IMR-90 (cell line): ENCODE measurements at regions of chr13 and their contacts with region 1.

Region 1: GRCh38 chr13:44903596-44903995 is 85.7 kb downstream of the NUFIP1 start:
- DNase-seq: peak; percentile 84
- ATAC-seq: peak; percentile 56
- H3K4me3 ChIP-seq: no peak overlapping the region
- H3K27ac ChIP-seq: peak overlapping the region; percentile 63; the same call in 1 of the 2 replicates
- H3K4me1 ChIP-seq: peaks cover 27% of the 10 kb centered on the region
- H3K27me3 ChIP-seq: no peaks in the 10 kb centered on the region
- CTCF ChIP-seq: no peak
- POLR2A ChIP-seq: no peak
- RAD21 ChIP-seq: no peak

Region 2: DNA sequence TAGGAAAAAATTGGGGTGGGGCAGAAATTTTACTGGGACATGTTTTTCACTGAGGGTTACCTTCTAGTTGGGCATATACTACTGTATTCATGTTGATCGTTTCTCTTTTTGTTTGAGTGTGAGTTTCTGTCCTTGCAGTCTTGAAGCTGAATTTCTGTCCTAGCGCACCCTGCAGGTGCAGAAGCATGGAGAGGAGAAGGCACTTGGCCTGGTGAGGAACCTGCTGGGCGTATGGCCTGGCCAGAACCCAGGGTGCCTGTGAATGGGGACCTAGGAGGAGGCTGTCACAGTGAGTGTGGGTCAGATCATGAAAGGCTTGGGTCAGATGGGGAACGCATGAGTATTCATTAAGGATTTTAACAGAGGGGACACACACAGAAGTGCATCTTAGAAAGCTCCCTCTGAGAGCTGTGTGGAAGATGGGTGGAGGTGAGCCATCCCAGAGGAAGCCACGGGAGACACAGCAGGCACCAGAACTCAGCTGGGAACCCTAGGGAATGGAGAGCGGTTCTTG is 493.2 kb before region 1 on chr13:
- CTCF ChIA-PET with region 1: no interaction called
- POLR2A ChIA-PET with region 1: no interaction called
- dilution Hi-C with region 1: no loop called
- in situ Hi-C with region 1: no loop called
- intact Hi-C with region 1: no loop called
- DNase-seq: no peak
- ATAC-seq: no peak
- H3K4me3 ChIP-seq: no peak overlapping the region
- H3K27ac ChIP-seq: no peak overlapping the region
- H3K4me1 ChIP-seq: peaks cover 7% of the 10 kb centered on the region
- H3K27me3 ChIP-seq: peaks cover 7% of the 10 kb centered on the region
- CTCF ChIP-seq: no peak
- POLR2A ChIP-seq: no peak
- RAD21 ChIP-seq: no peak

Region 3: DNA sequence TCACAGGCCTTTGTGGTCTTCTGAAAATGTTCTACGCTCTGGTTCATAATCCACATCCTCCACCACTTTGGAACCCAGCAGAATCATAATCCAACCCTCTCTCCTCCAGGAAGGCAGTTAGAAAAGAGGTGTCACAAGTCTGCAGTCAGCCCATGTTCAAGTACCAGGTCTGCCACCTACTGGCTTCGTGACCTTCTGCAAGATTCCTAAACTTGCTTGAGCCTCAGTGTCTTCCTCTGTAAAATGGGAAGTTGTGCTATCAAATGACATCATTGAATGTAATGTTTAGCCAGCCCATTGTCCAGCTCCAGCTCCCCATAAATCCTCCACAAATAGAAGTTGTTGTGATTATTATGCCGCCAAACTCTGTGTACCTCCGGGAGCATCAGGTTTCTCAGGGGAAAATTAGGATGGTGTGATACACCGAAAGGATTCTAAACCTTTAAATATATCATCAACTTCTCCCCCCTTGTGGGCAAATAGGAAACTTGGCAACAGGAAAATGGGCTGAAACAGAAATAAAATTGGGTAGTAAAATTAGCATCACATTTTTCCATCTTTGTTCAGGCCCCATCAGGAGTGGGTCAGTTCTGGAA is 24.0 kb before region 1 on chr13:
- CTCF ChIA-PET with region 1: no interaction called
- POLR2A ChIA-PET with region 1: no interaction called
- dilution Hi-C with region 1: no loop called
- in situ Hi-C with region 1: no loop called
- intact Hi-C with region 1: loop called (anchors 2 kb)
- DNase-seq: peak; percentile 64
- ATAC-seq: peak; percentile 40; the same call in 1 of the 2 replicates
- H3K4me3 ChIP-seq: no peak overlapping the region
- H3K27ac ChIP-seq: no peak overlapping the region
- H3K4me1 ChIP-seq: peaks cover 5% of the 10 kb centered on the region
- H3K27me3 ChIP-seq: no peaks in the 10 kb centered on the region
- CTCF ChIP-seq: peak; percentile 53
- POLR2A ChIP-seq: no peak
- RAD21 ChIP-seq: peak; percentile 68

Region 4: DNA sequence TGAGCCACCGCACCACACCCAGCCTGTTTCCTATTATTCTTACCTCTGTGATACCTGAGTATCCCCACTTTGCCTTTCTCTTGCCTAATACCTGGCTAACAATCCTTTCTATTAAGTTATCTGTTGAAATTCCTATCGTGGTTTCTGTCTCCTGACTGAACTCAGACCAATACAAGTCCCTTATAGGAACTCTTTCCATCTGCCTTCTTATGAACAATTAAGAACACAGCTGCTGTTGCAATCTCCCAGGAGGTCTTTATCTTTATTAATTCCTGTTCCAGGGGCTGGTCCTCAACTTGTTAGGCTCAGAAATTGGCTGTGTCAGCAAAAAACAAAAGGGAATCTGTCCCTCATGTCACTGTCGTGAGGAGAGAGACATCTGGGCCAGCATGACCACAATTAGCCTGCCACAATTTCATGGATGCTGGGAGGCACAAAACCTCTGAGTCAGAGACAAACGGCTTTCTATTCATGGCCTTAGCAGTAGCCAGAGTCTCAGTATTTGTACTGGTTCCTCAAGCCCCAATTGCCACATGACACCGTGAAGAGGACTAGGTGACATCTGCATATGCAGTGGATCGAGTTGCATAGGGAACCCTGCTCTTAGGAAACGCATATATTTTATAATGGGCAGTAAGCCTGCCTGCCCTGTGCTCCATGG is 27.5 kb after region 1 on chr13:
- CTCF ChIA-PET with region 1: no interaction called
- POLR2A ChIA-PET with region 1: no interaction called
- dilution Hi-C with region 1: no loop called
- in situ Hi-C with region 1: no loop called
- intact Hi-C with region 1: no loop called
- DNase-seq: no peak
- ATAC-seq: no peak
- H3K4me3 ChIP-seq: no peak overlapping the region
- H3K27ac ChIP-seq: no peak overlapping the region
- H3K4me1 ChIP-seq: peaks cover 6% of the 10 kb centered on the region; the same call in 1 of the 2 replicates
- H3K27me3 ChIP-seq: 0 out of 2 replicates have a peak, but pooled peaks cover 2% of the 10 kb centered on the region
- CTCF ChIP-seq: no peak
- POLR2A ChIP-seq: no peak
- RAD21 ChIP-seq: no peak

Region 5: DNA sequence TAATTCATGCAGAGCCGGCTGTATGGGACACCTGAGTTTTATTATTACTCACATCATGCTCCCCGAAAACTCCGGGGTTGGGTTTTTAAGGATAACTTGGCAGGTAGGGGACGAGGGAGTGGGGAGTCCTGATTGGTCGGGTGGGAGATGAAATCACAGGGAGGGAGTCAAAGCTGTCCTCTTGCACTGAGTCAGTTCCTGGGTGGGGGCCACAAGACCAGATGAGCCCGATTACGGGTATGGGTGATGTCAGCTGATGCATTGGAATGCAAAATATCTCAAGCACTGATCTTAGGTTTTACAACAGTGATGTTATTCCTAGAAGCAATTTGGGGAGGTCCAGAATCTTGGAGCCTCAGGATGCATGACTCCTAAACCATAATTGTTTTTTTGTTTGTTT is 542.6 kb after region 1 on chr13:
- CTCF ChIA-PET with region 1: no interaction called
- POLR2A ChIA-PET with region 1: no interaction called
- dilution Hi-C with region 1: no loop called
- in situ Hi-C with region 1: no loop called
- intact Hi-C with region 1: no loop called
- DNase-seq: peak; percentile 51
- ATAC-seq: peak; percentile 53
- H3K4me3 ChIP-seq: no peak overlapping the region
- H3K27ac ChIP-seq: no peak overlapping the region
- H3K4me1 ChIP-seq: 0 out of 2 replicates have a peak, but pooled peaks cover 2% of the 10 kb centered on the region
- H3K27me3 ChIP-seq: peaks cover 10% of the 10 kb centered on the region
- CTCF ChIP-seq: no peak
- POLR2A ChIP-seq: no peak
- RAD21 ChIP-seq: no peak